GM12878 (cell line): ENCODE measurements at regions of chr17 and their contacts with region 1.

Region 1: DNA sequence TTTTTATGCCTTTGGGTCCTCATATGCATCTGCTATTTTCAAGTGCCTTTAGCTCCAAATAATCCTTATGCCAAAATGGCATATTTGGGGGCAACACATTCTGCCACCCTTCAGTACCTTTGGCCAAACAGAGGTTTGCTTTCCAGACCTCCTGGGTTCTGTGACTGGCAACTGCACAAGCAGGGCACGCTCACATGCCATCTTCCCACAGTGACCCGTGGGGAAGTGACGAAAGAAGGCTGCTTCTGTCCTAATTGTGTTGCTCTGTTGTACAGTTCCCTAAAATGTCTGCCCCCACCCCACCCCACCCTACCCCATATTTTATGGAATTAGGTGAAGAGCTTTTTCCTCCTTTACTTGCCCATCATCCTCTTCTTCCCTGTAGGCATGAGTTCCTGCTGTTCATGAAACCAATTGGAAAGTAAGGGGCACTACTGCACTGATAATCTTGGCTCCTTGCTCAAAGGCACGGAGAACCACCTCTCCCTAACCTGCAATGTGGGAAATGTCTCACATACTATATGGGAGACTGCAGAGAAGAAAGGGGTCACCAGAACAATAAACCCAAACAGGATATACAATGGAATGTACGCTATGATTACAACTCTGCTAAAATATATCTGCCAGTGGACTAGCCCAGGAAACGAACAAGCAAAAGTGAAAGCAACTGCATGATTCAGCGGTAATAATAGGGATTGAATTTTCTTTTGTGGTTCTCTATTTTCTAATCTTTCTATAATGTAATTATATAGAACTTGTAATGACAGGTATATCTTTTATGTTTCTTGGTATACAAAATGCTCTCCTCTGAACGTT is 3.3 kb upstream of the SLFN12L start:
- DNase-seq: no peak
- ATAC-seq: peak; percentile 57
- H3K4me3 ChIP-seq: peak overlapping the region; percentile 84
- H3K27ac ChIP-seq: peak overlapping the region; percentile 92
- H3K4me1 ChIP-seq: peaks cover 19% of the 10 kb centered on the region
- H3K27me3 ChIP-seq: no peaks in the 10 kb centered on the region
- CTCF ChIP-seq: no peak
- EP300 ChIP-seq: no peak
- POLR2A ChIP-seq: peak; percentile 72
- RAD21 ChIP-seq: no peak

Region 2: GRCh38 chr17:35170968-35171771 is 369.6 kb before region 1 on chr17:
- CTCF ChIA-PET with region 1: interaction called, 3 read pairs
- POLR2A ChIA-PET with region 1: no interaction called
- RAD21 ChIA-PET with region 1: no interaction called
- SMC1A ChIA-PET with region 1: interaction called, 3 read pairs
- in situ Hi-C with region 1: loop called (anchors 5 kb)
- intact Hi-C with region 1: loop called (anchors 1 kb)
- DNase-seq: no peak
- ATAC-seq: peak; percentile 70
- H3K4me3 ChIP-seq: no peak overlapping the region
- H3K27ac ChIP-seq: no peak overlapping the region
- H3K4me1 ChIP-seq: no peaks in the 10 kb centered on the region
- H3K27me3 ChIP-seq: peaks cover 0 to 5% of the 10 kb centered on the region in 2 experiments; a peak in 3 of 4 replicates
- CTCF ChIP-seq: peak in 2 of 3 experiments; percentile 3 to 37; a peak in 2 of 6 replicates
- EP300 ChIP-seq: no peak
- POLR2A ChIP-seq: no peak
- RAD21 ChIP-seq: peak; percentile 30; the same call in 1 of the 2 replicates

Region 3: GRCh38 chr17:35312790-35313711 is 227.7 kb before region 1 on chr17:
- CTCF ChIA-PET with region 1: interaction called, 321 read pairs
- POLR2A ChIA-PET with region 1: interaction called, 8 read pairs
- RAD21 ChIA-PET with region 1: interaction called, 171 read pairs
- SMC1A ChIA-PET with region 1: interaction called, 251 read pairs
- in situ Hi-C with region 1: loop called (anchors 5 kb)
- intact Hi-C with region 1: loop called (anchors 1 kb)
- DNase-seq: peak; percentile 43
- ATAC-seq: peak; percentile 97
- H3K4me3 ChIP-seq: peak overlapping the region; percentile 52
- H3K27ac ChIP-seq: no peak overlapping the region
- H3K4me1 ChIP-seq: peaks cover 9% of the 10 kb centered on the region
- H3K27me3 ChIP-seq: no peaks in the 10 kb centered on the region
- CTCF ChIP-seq: peak; percentile 77 to 82 (median 78)
- EP300 ChIP-seq: no peak
- POLR2A ChIP-seq: no peak
- RAD21 ChIP-seq: peak; percentile 92

Region 4: DNA sequence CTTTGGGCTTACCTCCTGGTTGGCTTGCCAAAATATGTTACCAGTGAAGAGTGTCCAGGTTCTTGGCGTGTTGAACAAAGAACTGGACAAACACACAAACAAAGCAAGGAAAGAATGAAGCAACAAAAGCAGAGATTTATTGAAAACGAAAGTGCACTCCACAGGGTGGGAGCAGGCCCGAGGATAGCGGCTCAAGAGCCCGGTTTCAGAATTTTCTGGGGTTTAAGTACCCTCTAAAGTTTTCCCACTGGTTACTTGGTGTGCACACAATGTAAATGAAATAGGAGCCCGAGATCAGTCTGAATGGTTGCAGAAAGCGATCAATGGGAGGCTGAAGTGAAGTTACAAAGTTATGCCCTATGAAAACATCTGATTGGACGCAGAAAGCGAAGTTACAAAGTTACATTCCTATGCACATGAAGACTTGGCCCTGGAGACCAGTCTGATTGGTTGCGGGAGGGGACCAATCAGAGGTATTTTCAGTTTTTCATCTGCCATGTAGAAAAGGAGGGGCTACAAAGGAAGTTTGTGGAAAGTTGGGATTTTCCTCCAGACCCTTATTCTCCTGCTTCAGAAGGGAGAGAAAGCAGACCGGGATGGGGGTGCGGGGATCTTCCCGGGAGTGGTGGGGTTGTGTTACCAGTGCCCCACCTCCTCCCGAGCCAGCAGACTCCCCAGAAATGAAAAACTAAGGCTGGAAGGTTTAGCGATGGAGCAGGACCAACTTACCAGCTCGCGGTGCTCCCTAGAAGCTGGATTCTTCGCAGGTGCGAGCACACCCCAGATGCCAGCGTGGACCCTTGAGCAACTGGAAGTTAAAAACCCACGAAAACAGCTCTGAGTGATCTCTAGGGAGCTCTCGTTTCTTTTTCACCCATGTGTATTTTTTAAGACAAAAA is 108.4 kb before region 1 on chr17 and contains the start of gene SLFN12:
- CTCF ChIA-PET with region 1: interaction called, 7 read pairs
- POLR2A ChIA-PET with region 1: interaction called, 3 read pairs
- RAD21 ChIA-PET with region 1: interaction called, 9 read pairs
- SMC1A ChIA-PET with region 1: interaction called, 7 read pairs
- in situ Hi-C with region 1: no loop called
- intact Hi-C with region 1: loop called (anchors 5 kb)
- DNase-seq: peak; percentile 67
- ATAC-seq: peak; percentile 94
- H3K4me3 ChIP-seq: peak within 1 kb of the TSS; percentile 82
- H3K27ac ChIP-seq: peak within 1 kb of the TSS; percentile 90
- H3K4me1 ChIP-seq: peaks cover 16% of the 10 kb centered on the region
- H3K27me3 ChIP-seq: no peaks in the 10 kb centered on the region
- CTCF ChIP-seq: no peak
- EP300 ChIP-seq: no peak
- POLR2A ChIP-seq: 0 out of 2 replicates have a peak, but pooled peaks have one; percentile 28
- RAD21 ChIP-seq: no peak
- polyA plus RNA-seq, gene SLFN12: 11.2 to 14.8 TPM

Region 5: DNA sequence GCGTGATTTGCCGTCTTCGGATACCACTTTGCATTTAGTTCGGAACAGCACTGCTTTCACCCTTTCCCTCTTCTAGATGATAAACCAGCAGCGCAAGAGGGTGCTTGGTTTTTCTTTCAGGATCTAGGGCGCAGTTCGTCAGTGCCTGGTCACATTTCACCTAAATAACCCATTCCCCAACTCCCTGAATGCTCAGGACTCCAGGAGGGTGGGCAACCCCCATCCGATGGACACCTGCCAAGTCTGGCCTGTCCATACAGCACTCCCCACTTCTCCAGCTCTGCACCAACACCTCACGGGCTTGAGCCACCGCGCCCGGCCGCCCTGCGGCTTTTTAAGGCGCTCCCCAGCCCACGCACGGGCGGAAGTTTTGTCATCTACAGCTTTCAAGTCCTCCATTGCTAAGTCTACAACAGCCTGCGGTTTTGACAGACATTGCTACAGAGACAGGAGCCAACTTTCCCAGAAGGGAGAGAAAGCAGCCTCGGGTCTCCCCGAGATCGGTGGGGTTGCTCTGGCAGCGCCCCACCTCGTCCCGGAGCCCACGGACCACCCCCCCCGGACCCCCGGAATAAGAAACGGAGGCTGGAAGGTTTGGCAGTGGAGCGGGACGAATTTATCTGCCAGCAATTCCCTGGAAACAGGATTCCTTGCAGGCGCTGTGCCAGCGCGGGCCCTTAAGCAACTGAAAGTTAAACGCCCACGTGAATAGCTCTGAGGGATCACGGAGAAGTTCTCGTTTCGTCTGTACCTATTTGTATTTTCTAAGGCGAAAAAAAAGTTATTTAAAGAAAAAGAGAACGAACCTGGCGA is 53.7 kb before region 1 on chr17:
- CTCF ChIA-PET with region 1: interaction called, 18 read pairs
- POLR2A ChIA-PET with region 1: interaction called, 3 read pairs
- RAD21 ChIA-PET with region 1: interaction called, 25 read pairs
- SMC1A ChIA-PET with region 1: interaction called, 23 read pairs
- in situ Hi-C with region 1: no loop called
- intact Hi-C with region 1: no loop called
- DNase-seq: peak; percentile 23
- ATAC-seq: peak; percentile 88
- H3K4me3 ChIP-seq: peak overlapping the region; percentile 66
- H3K27ac ChIP-seq: peak overlapping the region; percentile 43
- H3K4me1 ChIP-seq: peaks cover 12% of the 10 kb centered on the region
- H3K27me3 ChIP-seq: no peaks in the 10 kb centered on the region
- CTCF ChIP-seq: no peak
- EP300 ChIP-seq: no peak
- POLR2A ChIP-seq: 0 out of 2 replicates have a peak, but pooled peaks have one; percentile 23
- RAD21 ChIP-seq: no peak

Region 6: GRCh38 chr17:35587074-35587971 is 46.5 kb after region 1 on chr17 and contains the start of gene AP2B1:
- CTCF ChIA-PET with region 1: interaction called, 5 read pairs
- POLR2A ChIA-PET with region 1: interaction called, 12 read pairs
- RAD21 ChIA-PET with region 1: interaction called, 3 read pairs
- SMC1A ChIA-PET with region 1: interaction called, 7 read pairs
- in situ Hi-C with region 1: no loop called
- intact Hi-C with region 1: no loop called
- DNase-seq: peak; percentile 95
- ATAC-seq: peak; percentile 99
- H3K4me3 ChIP-seq: peak within 1 kb of the TSS; percentile 98
- H3K27ac ChIP-seq: peak within 1 kb of the TSS; percentile 87
- H3K4me1 ChIP-seq: peaks cover 3% of the 10 kb centered on the region; the same call in 1 of the 2 replicates
- H3K27me3 ChIP-seq: no peaks in the 10 kb centered on the region
- CTCF ChIP-seq: no peak; a peak in 1 of 6 replicates
- EP300 ChIP-seq: 0 out of 4 replicates have a peak, but pooled peaks of 1 of the 2 experiments have one; percentile 62
- POLR2A ChIP-seq: peak; percentile 88
- RAD21 ChIP-seq: no peak
- polyA plus RNA-seq, gene AP2B1: 18.6 to 24.3 TPM